ENCODE measurements at regions of chr9 and their contacts with region 1.

Region 1: GRCh38 chr9:2727966-2728613 is 10.8 kb downstream of the KCNV2 start:
- DNase-seq: peak; percentile 61
- ATAC-seq: peak; percentile 93
- H3K4me3 ChIP-seq: no peak overlapping the region
- H3K27ac ChIP-seq: no peak overlapping the region
- H3K4me1 ChIP-seq: no peaks in the 10 kb centered on the region; the same call in 1 of the 2 replicates
- H3K27me3 ChIP-seq: no peaks in the 10 kb centered on the region
- CTCF ChIP-seq: peak; percentile 81 to 90 (median 87)
- EP300 ChIP-seq: peak; percentile 11 to 18; a peak in 2 of 4 replicates
- POLR2A ChIP-seq: no peak
- RAD21 ChIP-seq: peak; percentile 88

Region 2: DNA sequence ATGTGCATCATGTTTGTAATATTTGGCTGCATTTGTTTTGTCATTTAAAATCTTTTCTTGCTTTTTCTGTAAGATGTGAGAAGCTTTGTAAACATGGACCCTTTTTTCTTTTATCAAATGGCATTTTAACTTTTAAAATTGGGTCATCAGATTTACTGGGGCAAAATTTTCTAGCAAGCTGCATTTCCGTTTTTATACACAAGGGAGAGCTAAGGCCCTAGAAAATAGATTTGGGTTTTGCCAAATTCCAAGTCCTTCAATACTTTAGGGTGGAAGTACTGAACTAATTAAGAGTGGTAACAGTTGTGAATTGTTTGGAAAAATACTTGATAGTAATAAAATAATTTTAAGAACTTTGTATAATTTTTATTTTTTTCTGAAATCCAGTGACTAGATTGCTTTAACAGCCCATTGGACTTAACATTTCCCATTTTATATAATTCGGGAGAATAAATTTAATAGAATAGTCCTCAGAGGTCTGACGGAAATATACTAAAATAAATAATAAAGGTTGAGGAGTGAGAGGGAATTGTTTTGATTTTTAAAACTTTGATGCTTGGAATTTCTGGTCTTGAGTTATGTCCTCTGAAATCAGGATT is 595.5 kb before region 1 on chr9:
- CTCF ChIA-PET with region 1: interaction called, 24 read pairs
- POLR2A ChIA-PET with region 1: no interaction called
- RAD21 ChIA-PET with region 1: interaction called, 21 read pairs
- SMC1A ChIA-PET with region 1: interaction called, 16 read pairs
- in situ Hi-C with region 1: loop called (anchors 10 kb)
- intact Hi-C with region 1: loop called (anchors 5 kb)
- DNase-seq: no peak
- ATAC-seq: peak; percentile 25; the same call in 1 of the 3 replicates
- H3K4me3 ChIP-seq: no peak overlapping the region
- H3K27ac ChIP-seq: no peak overlapping the region
- H3K4me1 ChIP-seq: no peaks in the 10 kb centered on the region
- H3K27me3 ChIP-seq: no peaks in the 10 kb centered on the region
- CTCF ChIP-seq: peak; percentile 51 to 58 (median 53)
- EP300 ChIP-seq: no peak
- POLR2A ChIP-seq: no peak
- RAD21 ChIP-seq: peak; percentile 69

Region 3: DNA sequence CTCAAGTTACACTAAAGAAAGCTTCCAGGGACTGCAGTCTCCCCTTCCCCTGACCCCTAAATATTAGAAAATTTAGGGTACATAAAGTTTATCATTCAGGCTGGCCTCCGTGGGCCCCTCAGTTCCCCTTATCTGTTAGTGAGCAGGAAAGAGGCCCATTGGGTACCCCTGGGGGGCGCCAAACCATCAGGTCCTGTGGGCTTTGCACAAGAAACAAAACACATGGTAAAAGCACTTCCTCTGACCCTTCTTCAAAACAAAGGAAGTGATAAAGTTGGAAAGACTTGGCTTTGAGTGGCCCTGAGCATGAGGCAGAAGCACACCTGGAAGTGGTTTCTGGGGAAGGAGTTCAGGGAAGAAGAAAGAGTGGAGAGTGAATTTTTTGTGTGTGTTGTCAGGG is 500.0 kb before region 1 on chr9:
- CTCF ChIA-PET with region 1: interaction called, 25 read pairs
- POLR2A ChIA-PET with region 1: no interaction called
- RAD21 ChIA-PET with region 1: interaction called, 15 read pairs
- SMC1A ChIA-PET with region 1: interaction called, 13 read pairs
- in situ Hi-C with region 1: no loop called
- intact Hi-C with region 1: loop called (anchors 1 kb)
- DNase-seq: no peak
- ATAC-seq: peak; percentile 64
- H3K4me3 ChIP-seq: no peak overlapping the region
- H3K27ac ChIP-seq: no peak overlapping the region
- H3K4me1 ChIP-seq: peaks cover 16% of the 10 kb centered on the region
- H3K27me3 ChIP-seq: no peaks in the 10 kb centered on the region
- CTCF ChIP-seq: peak; percentile 21 to 42 (median 33); a peak in 4 of 6 replicates
- EP300 ChIP-seq: no peak
- POLR2A ChIP-seq: no peak
- RAD21 ChIP-seq: peak; percentile 51

Region 4: DNA sequence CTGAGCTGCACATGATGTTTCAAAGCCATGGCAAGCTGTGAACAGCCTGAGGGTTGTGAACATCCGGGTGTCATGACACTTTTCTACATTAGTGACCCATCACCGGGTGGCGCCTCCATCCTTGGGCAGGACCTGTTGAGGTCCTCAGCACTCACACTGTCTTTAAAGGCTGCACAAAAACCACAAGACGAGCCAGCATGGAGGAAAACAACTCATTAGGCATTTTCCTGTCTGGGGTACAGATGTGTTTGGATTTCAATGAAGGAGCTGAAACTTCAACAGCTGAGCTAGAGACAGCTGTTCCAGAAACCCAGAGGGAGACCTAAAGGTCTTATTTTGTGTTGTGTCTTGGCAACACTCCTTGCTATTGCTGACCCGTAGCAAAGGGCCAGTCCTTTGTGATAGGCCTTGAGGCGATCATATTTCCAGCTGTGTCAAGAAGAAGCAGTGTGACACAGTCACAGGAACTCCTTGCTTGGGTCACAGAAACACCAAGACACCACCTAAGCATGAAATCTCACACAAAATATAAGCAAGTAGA is 258.3 kb before region 1 on chr9:
- CTCF ChIA-PET with region 1: interaction called, 22 read pairs
- POLR2A ChIA-PET with region 1: interaction called, 7 read pairs
- RAD21 ChIA-PET with region 1: interaction called, 39 read pairs
- SMC1A ChIA-PET with region 1: interaction called, 26 read pairs
- in situ Hi-C with region 1: no loop called
- intact Hi-C with region 1: loop called (anchors 5 kb)
- DNase-seq: peak; percentile 7
- ATAC-seq: peak; percentile 44
- H3K4me3 ChIP-seq: no peak overlapping the region
- H3K27ac ChIP-seq: no peak overlapping the region
- H3K4me1 ChIP-seq: peaks cover 6% of the 10 kb centered on the region; the same call in 1 of the 2 replicates
- H3K27me3 ChIP-seq: no peaks in the 10 kb centered on the region
- CTCF ChIP-seq: peak in 2 of 3 experiments; percentile 17 to 36; a peak in 3 of 6 replicates
- EP300 ChIP-seq: no peak
- POLR2A ChIP-seq: no peak
- RAD21 ChIP-seq: peak; percentile 59; the same call in 1 of the 2 replicates

Region 5: GRCh38 chr9:2620919-2621679 is 107.0 kb before region 1 on chr9:
- CTCF ChIA-PET with region 1: interaction called, 9 read pairs
- POLR2A ChIA-PET with region 1: no interaction called
- RAD21 ChIA-PET with region 1: interaction called, 7 read pairs
- SMC1A ChIA-PET with region 1: interaction called, 4 read pairs
- in situ Hi-C with region 1: no loop called
- intact Hi-C with region 1: loop called (anchors 5 kb)
- DNase-seq: no peak
- ATAC-seq: peak; percentile 46
- H3K4me3 ChIP-seq: peak overlapping the region; percentile 65
- H3K27ac ChIP-seq: no peak overlapping the region
- H3K4me1 ChIP-seq: peaks cover 2% of the 10 kb centered on the region; the same call in 1 of the 2 replicates
- H3K27me3 ChIP-seq: peaks cover 0 to 16% of the 10 kb centered on the region in 2 experiments; a peak in 3 of 4 replicates
- CTCF ChIP-seq: no peak; a peak in 1 of 6 replicates
- EP300 ChIP-seq: no peak
- POLR2A ChIP-seq: peak; percentile 19; the same call in 1 of the 2 replicates
- RAD21 ChIP-seq: no peak

Region 6: GRCh38 chr9:2655411-2655901 is 72.6 kb before region 1 on chr9:
- CTCF ChIA-PET with region 1: interaction called, 8 read pairs
- POLR2A ChIA-PET with region 1: no interaction called
- RAD21 ChIA-PET with region 1: interaction called, 3 read pairs
- SMC1A ChIA-PET with region 1: interaction called, 8 read pairs
- in situ Hi-C with region 1: no loop called
- intact Hi-C with region 1: loop called (anchors 5 kb)
- DNase-seq: no peak
- ATAC-seq: peak; percentile 64
- H3K4me3 ChIP-seq: no peak overlapping the region
- H3K27ac ChIP-seq: no peak overlapping the region
- H3K4me1 ChIP-seq: no peaks in the 10 kb centered on the region
- H3K27me3 ChIP-seq: no peaks in the 10 kb centered on the region
- CTCF ChIP-seq: no peak
- EP300 ChIP-seq: no peak
- POLR2A ChIP-seq: no peak
- RAD21 ChIP-seq: no peak

Region 7: DNA sequence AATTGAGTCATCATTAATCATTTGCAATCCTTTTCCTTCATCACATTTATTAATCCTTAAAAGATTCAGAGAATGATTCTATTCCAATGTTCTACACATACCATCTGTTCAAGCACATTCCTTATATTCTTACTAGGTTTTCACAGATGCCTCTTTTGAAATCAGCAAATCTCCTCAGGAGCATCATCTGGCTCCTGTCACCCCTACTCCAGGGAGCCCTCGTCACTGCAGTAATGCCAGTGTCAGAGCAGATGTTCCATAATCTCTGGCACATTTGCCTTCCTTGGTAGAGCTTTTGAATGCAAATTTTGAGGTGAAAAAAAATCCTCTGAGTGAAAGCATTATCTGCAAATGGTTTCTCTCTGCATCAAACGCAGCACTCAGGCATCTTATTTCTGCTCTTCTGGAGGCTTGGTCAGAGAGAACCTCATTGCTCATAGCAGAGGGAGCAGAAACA is 18.4 kb before region 1 on chr9:
- CTCF ChIA-PET with region 1: interaction called, 10 read pairs
- POLR2A ChIA-PET with region 1: interaction called, 3 read pairs
- RAD21 ChIA-PET with region 1: interaction called, 3 read pairs
- SMC1A ChIA-PET with region 1: interaction called, 10 read pairs
- in situ Hi-C with region 1: no loop called
- intact Hi-C with region 1: no loop called
- DNase-seq: no peak
- ATAC-seq: peak; percentile 76
- H3K4me3 ChIP-seq: no peak overlapping the region
- H3K27ac ChIP-seq: no peak overlapping the region
- H3K4me1 ChIP-seq: no peaks in the 10 kb centered on the region; the same call in 1 of the 2 replicates
- H3K27me3 ChIP-seq: no peaks in the 10 kb centered on the region
- CTCF ChIP-seq: no peak
- EP300 ChIP-seq: no peak
- POLR2A ChIP-seq: no peak
- RAD21 ChIP-seq: no peak

Measured in GM12878 (cell line).